SK-N-SH (cell line): ENCODE measurements at regions of chr1 and their contacts with region 1.

Region 1: DNA sequence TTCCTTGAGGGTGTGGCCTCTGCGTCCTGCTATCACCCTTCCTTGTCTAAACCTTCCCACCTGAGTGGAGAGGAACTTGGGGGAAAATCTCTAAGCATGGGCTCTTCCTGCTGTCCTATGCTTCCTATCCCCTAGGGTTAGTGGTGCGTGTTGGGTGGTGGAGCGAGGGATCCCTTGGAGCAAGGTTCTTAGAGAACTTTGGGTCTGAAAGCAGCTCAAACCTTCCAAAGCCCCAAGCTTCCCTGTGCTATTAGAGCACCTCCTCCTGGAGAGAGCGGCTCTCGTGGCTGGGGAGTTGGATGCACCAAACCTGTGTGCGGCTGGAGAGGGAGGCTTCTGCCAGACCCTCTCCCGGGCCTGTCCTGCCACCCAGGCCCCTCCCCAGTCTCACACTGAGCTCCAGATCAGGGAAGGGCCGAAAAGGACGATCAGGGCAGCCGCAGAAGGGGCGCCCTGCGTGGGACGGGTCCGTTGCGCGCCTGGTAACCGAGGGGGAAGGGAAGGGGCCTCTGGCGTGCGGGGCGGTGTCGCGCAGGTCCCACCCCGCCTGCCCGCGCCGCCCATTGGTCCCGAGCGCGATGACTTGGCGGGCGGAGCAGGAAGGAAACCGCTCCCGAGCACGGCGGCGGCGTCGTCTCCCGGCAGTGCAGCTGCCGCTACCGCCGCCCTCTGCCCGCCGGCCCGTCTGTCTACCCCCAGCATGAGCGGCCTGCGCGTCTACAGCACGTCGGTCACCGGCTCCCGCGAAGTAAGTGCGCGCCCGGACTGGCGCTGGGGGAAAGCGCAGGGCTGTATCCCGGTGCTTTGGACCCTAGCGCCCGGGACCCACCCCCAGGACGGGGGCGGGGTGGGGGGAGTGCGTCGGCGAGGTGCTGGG is at the start of gene SH3BGRL3:
- DNase-seq: peak; percentile 96
- H3K4me3 ChIP-seq: peak within 1 kb of the TSS; percentile 85 to 95
- H3K27ac ChIP-seq: peak within 1 kb of the TSS; percentile 76 to 87
- H3K4me1 ChIP-seq: peaks cover 36 to 71% of the 10 kb centered on the region in 2 experiments; a peak in 3 of 4 replicates
- H3K27me3 ChIP-seq: no peaks in the 10 kb centered on the region
- CTCF ChIP-seq: peak; percentile 62
- EP300 ChIP-seq: no peak
- RAD21 ChIP-seq: peak; percentile 19; the same call in 1 of the 2 replicates
- polyA plus RNA-seq, gene SH3BGRL3: 131 and 202 TPM in 2 replicates

Region 2: DNA sequence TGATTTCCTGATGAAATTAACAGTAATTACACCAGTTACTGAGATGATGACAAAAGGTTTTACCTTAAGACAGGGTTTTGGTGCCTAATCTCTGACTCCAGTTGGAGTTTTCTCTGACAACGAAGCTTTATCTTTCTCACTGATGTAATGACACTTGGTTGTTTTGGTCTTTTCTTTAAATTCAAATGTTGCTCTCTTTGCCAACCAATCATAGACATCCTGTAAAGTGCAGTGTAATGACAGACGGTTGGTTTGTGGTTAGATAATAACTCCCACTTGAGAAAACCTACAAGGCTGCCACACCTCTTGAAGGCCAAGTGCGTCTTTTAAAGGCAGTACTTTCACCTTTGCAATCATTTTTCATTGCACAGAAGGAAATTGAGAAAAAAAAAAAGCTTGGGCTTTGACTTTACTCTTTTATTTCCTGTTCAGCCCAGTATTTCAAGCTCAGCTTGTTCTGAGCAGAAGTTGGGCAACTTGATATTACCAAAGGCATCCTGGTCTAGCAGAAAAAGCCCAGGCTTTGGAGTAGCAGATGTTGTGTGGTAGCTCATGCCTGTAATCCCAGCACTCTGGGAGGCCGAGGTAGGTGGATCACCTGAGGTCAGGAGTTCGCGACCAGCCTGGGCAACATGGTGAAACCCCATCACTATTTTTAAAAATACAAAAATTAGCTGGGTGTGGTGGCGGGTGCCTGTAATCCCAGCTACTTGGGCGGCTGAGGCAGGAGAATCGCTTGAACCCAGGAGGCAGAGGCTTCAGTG is 153.2 kb before region 1 on chr1:
- CTCF ChIA-PET with region 1: no interaction called
- POLR2A ChIA-PET with region 1: no interaction called
- DNase-seq: no peak
- H3K4me3 ChIP-seq: no peak overlapping the region
- H3K27ac ChIP-seq: no peak overlapping the region
- H3K4me1 ChIP-seq: peaks cover 4 to 8% of the 10 kb centered on the region in 2 experiments; a peak in 3 of 4 replicates
- H3K27me3 ChIP-seq: no peaks in the 10 kb centered on the region
- CTCF ChIP-seq: no peak
- EP300 ChIP-seq: no peak
- RAD21 ChIP-seq: no peak

Region 3: GRCh38 chr1:26254404-26254803 is 25.3 kb before region 1 on chr1:
- CTCF ChIA-PET with region 1: interaction called, 17 read pairs
- POLR2A ChIA-PET with region 1: no interaction called
- DNase-seq: no peak
- H3K4me3 ChIP-seq: no peak overlapping the region
- H3K27ac ChIP-seq: no peak overlapping the region
- H3K4me1 ChIP-seq: no peaks in the 10 kb centered on the region
- H3K27me3 ChIP-seq: no peaks in the 10 kb centered on the region
- CTCF ChIP-seq: no peak
- EP300 ChIP-seq: no peak
- RAD21 ChIP-seq: no peak

Region 4: DNA sequence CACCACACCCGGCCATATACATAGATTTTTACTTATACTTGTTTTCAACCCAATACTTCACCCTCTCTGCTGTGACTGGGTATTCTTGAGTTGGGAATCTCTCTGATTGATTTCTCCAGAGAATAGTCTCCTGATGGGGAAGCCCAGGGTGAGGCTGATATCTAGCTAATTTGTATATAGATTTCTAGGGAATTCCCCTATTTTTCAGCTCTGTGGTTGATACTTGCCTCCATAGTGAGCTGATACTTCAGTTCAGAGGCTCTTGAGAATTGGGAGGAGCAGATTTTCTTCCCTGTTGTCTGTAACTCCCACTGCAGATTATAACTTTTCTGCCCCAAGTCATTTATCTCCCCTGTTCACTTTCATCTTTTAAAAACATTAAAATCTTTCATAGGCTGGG is 14.3 kb before region 1 on chr1:
- CTCF ChIA-PET with region 1: interaction called, 10 read pairs
- POLR2A ChIA-PET with region 1: no interaction called
- DNase-seq: no peak
- H3K4me3 ChIP-seq: no peak overlapping the region
- H3K27ac ChIP-seq: no peak overlapping the region
- H3K4me1 ChIP-seq: no peaks in the 10 kb centered on the region
- H3K27me3 ChIP-seq: no peaks in the 10 kb centered on the region
- CTCF ChIP-seq: no peak
- EP300 ChIP-seq: no peak
- RAD21 ChIP-seq: no peak